Activated B cell treated with CpG ODN at 0.5 μM for 24 hours (primary cell): ENCODE measurements at regions of chr11 and their contacts with region 1.

Region 1: GRCh38 chr11:60498853-60499252 is 6.3 kb downstream of the MS4A12 start:
- DNase-seq: no peak
- ATAC-seq: peak; percentile 99
- H3K4me3 Mint-ChIP-seq: peak overlapping the region; percentile 56
- H3K27ac Mint-ChIP-seq: peak overlapping the region; percentile 89
- H3K4me1 Mint-ChIP-seq: peaks cover 43% of the 10 kb centered on the region
- H3K27me3 Mint-ChIP-seq: no peaks in the 10 kb centered on the region
- CTCF ChIP-seq: no peak

Region 2: GRCh38 chr11:60513496-60514460 is 14.9 kb after region 1 on chr11:
- CTCF ChIA-PET with region 1: no interaction called
- POLR2A ChIA-PET with region 1: no interaction called
- intact Hi-C with region 1: loop called (anchors 2 kb)
- DNase-seq: no peak
- ATAC-seq: no peak
- H3K4me3 Mint-ChIP-seq: no peak overlapping the region
- H3K27ac Mint-ChIP-seq: no peak overlapping the region
- H3K4me1 Mint-ChIP-seq: peaks cover 14% of the 10 kb centered on the region
- H3K27me3 Mint-ChIP-seq: peaks cover 4% of the 10 kb centered on the region
- CTCF ChIP-seq: no peak

Region 3: GRCh38 chr11:60570970-60571369 is 72.1 kb after region 1 on chr11:
- CTCF ChIA-PET with region 1: no interaction called
- POLR2A ChIA-PET with region 1: no interaction called
- intact Hi-C with region 1: loop called (anchors 2 kb)
- DNase-seq: no peak
- ATAC-seq: peak; percentile 96
- H3K4me3 Mint-ChIP-seq: peak overlapping the region; percentile 7
- H3K27ac Mint-ChIP-seq: peak overlapping the region; percentile 56
- H3K4me1 Mint-ChIP-seq: peaks cover 30% of the 10 kb centered on the region
- H3K27me3 Mint-ChIP-seq: peaks cover 3% of the 10 kb centered on the region
- CTCF ChIP-seq: no peak